A673 (cell line): ENCODE measurements at regions of chr1 and their contacts with region 1.

Region 1: GRCh38 chr1:181424786-181425403 is 58.4 kb upstream of the CACNA1E start:
- DNase-seq: peak; percentile 88
- H3K4me3 ChIP-seq: no peak overlapping the region
- H3K27ac ChIP-seq: no peak overlapping the region
- H3K4me1 ChIP-seq: no peaks in the 10 kb centered on the region
- H3K27me3 ChIP-seq: peaks cover 17% of the 10 kb centered on the region
- CTCF ChIP-seq: peak; percentile 99

Region 2: GRCh38 chr1:181189691-181190363 is 235.1 kb before region 1 on chr1:
- CTCF ChIA-PET with region 1: interaction called, 28 read pairs
- POLR2A ChIA-PET with region 1: no interaction called
- intact Hi-C with region 1: loop called (anchors 1 kb)
- DNase-seq: peak; percentile 74
- H3K4me3 ChIP-seq: peak overlapping the region; percentile 43
- H3K27ac ChIP-seq: no peak overlapping the region
- H3K4me1 ChIP-seq: no peaks in the 10 kb centered on the region
- H3K27me3 ChIP-seq: no peaks in the 10 kb centered on the region
- CTCF ChIP-seq: peak; percentile 97